ENCODE measurements at regions of chr6 and their contacts with region 1.

Region 1: DNA sequence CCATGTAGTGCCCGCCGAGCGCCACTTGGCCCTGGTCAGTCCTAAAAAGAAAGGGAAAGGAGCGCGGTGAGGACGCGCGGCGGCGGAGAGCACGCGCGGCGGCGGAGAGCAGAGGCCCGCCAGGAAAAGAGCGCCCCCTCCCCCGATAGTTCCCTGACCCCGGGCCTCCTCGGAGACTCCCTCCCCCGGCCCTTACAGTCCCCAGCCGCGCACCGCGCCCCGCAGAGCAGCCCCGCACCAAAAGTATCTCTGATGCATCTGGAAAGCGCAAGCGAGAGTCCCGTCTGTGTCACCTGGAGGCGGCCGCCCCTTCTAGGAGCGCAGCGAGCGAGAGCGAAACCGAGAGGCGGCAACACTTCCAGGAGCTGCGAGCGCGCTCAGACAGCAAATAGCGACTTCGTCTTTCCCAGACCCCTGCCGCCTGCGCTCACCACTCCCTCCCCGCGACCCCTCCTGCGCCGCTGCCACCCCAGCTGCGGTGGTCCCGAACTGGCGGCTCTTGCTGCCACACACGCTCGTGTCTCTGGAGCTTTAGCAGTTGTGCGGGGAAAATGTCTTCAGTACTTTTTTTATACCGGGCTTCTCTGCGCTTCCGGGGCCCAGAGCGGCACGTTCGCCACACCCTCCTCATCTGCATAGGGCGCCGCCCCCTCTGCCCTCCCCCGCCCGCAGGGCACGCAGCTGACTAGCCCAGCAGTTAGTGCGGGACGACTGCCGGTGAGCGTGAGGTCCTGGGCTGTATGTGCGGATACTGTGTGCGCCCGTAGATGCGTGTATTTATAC is at the start of gene TENT5A:
- DNase-seq: peak; percentile 68
- H3K4me3 ChIP-seq: peak within 1 kb of the TSS; percentile 52 to 78 (median 69)
- H3K27ac ChIP-seq: peak within 1 kb of the TSS; percentile 42
- H3K4me1 ChIP-seq: peaks cover 8% of the 10 kb centered on the region
- H3K27me3 ChIP-seq: peaks cover 0 to 11% of the 10 kb centered on the region in 2 experiments
- CTCF ChIP-seq: no peak
- POLR2A ChIP-seq: peak; percentile 59
- total RNA-seq, gene TENT5A: 1.2 and 2.4 TPM in 2 replicates

Region 2: DNA sequence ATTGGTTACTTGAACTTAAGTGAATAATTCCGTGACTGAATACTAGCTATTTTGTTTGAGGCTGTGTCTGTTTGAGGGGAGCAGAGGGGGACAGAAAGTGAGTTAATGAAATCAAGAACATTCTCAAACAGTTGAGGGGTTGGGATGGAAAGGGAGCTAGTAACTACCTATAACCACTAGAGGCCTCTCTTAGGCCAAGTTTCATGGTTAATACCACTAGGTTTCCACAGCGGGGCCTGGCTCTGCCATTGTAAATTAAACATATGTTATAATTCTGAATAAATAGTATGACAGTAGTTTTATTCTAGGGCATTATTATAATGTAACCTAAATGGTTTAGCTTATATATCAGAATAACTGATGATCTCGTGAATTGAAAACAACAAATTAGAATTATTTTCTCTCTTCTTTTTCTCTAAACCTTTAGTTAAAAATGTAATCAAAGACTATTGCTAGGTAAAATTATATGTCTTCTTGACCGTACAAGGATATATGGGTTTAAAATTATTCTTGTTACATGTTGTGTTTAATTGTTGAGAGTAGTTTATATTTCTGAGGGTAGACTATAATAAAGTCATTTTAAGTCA is 1537.8 kb before region 1 on chr6:
- CTCF ChIA-PET with region 1: interaction called, 12 read pairs
- POLR2A ChIA-PET with region 1: no interaction called
- dilution Hi-C with region 1: no loop called
- intact Hi-C with region 1: loop called (anchors 5 kb)
- DNase-seq: peak; percentile 62
- H3K4me3 ChIP-seq: no peak overlapping the region
- H3K27ac ChIP-seq: no peak overlapping the region
- H3K4me1 ChIP-seq: no peaks in the 10 kb centered on the region
- H3K27me3 ChIP-seq: no peaks in the 10 kb centered on the region
- CTCF ChIP-seq: peak; percentile 55 to 74
- POLR2A ChIP-seq: no peak

Region 3: GRCh38 chr6:80605165-80605989 is 1147.0 kb before region 1 on chr6:
- CTCF ChIA-PET with region 1: interaction called, 11 read pairs
- POLR2A ChIA-PET with region 1: no interaction called
- dilution Hi-C with region 1: no loop called
- intact Hi-C with region 1: loop called (anchors 2 kb)
- DNase-seq: peak; percentile 60
- H3K4me3 ChIP-seq: no peak overlapping the region
- H3K27ac ChIP-seq: no peak overlapping the region
- H3K4me1 ChIP-seq: no peaks in the 10 kb centered on the region
- H3K27me3 ChIP-seq: no peaks in the 10 kb centered on the region
- CTCF ChIP-seq: peak; percentile 25 to 46
- POLR2A ChIP-seq: no peak

Region 4: DNA sequence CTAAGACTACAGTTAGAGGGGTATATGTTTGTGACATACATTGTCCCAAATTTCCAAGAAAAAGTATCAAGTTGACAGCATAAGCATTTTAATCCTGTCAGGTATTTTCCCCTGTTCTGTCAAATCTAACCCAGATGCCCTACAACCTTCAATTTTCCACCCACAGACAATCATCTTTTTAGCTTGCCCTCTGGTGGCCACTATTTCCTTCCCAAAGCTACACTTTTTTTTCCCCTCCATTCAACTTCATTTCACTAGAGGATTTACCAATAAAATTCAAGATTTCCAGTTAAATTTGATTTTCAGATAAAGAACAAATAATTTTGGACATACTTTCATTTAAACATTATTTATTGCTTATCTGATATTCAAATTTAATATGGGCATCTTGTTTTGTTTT is 286.5 kb before region 1 on chr6:
- CTCF ChIA-PET with region 1: no interaction called
- POLR2A ChIA-PET with region 1: no interaction called
- dilution Hi-C with region 1: no loop called
- intact Hi-C with region 1: loop called (anchors 2 kb)
- DNase-seq: peak; percentile 19
- H3K4me3 ChIP-seq: no peak overlapping the region
- H3K27ac ChIP-seq: no peak overlapping the region
- H3K4me1 ChIP-seq: no peaks in the 10 kb centered on the region
- H3K27me3 ChIP-seq: no peaks in the 10 kb centered on the region
- CTCF ChIP-seq: peak; percentile 28 to 38
- POLR2A ChIP-seq: no peak

Region 5: DNA sequence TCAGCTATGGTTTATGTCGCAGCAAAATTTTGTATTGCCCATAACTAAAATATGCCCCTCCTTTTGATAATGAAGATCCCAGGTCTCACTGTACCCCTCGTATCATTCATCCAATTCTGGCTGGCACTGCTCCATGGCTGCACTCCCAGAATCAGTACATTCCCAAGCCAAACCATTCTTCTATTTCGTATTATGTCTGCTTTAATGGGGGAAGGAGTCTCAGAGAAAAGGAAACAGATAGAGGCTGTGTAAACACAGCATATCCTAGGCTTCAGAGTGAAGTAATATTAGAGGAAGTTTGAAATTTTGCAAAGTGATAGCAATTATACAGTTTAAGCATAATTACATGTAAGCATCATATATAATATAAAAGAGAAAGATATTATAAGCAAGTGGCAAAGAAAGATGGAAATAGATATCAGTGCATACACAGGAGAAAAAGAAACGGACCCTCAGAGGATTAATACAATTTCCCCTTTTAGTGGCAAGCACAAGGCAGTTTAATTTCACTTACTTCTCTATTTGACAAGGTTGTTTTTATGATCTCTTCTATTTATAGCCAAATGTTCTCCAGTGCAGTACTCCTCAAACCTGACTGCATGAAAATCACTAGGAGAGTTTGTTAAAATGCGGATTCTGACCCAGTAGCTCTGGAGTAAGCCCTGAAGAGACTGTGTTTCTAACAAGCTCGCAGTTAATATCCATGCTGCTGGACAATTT is 56.7 kb after region 1 on chr6:
- CTCF ChIA-PET with region 1: interaction called, 3 read pairs
- POLR2A ChIA-PET with region 1: no interaction called
- dilution Hi-C with region 1: no loop called
- intact Hi-C with region 1: loop called (anchors 1 kb)
- DNase-seq: peak; percentile 93
- H3K4me3 ChIP-seq: peak overlapping the region in 2 of 3 experiments; percentile 10 to 40
- H3K27ac ChIP-seq: peak overlapping the region; percentile 78
- H3K4me1 ChIP-seq: peaks cover 27% of the 10 kb centered on the region
- H3K27me3 ChIP-seq: no peaks in the 10 kb centered on the region
- CTCF ChIP-seq: no peak
- POLR2A ChIP-seq: peak; percentile 37

Region 6: DNA sequence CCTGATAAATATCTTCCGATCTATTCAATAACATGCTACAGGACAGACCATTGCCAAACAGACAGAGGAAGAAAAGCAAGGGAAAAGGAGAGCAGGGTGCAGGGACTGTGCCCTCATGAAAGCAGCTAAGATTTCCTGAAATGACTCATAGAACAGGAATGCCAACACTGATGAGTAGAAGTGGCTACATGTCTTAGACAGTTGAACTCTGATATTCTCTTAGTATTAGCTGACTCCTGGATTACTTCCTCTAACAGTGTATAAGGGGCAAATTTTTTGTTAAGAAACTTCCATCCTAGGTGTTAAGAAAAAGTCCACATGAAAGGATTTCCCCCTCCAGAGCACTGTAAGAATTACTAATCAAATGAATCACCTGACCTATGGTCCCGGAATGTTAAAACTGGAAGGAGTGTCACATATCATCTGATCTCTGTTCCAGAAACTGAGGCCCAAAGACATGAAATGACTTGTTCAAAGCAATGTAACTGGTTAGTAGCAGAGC is 270.3 kb after region 1 on chr6:
- CTCF ChIA-PET with region 1: no interaction called
- POLR2A ChIA-PET with region 1: no interaction called
- dilution Hi-C with region 1: no loop called
- intact Hi-C with region 1: loop called (anchors 5 kb)
- DNase-seq: peak; percentile 77
- H3K4me3 ChIP-seq: no peak overlapping the region
- H3K27ac ChIP-seq: peak overlapping the region; percentile 80
- H3K4me1 ChIP-seq: peaks cover 27% of the 10 kb centered on the region
- H3K27me3 ChIP-seq: no peaks in the 10 kb centered on the region
- CTCF ChIP-seq: no peak
- POLR2A ChIP-seq: peak; percentile 32

Measured in endothelial cell of umbilical vein (primary cell).